Posterior vena cava (tissue), 2 donors: ENCODE measurements at regions of chr12 and their contacts with region 1.

Region 1: DNA sequence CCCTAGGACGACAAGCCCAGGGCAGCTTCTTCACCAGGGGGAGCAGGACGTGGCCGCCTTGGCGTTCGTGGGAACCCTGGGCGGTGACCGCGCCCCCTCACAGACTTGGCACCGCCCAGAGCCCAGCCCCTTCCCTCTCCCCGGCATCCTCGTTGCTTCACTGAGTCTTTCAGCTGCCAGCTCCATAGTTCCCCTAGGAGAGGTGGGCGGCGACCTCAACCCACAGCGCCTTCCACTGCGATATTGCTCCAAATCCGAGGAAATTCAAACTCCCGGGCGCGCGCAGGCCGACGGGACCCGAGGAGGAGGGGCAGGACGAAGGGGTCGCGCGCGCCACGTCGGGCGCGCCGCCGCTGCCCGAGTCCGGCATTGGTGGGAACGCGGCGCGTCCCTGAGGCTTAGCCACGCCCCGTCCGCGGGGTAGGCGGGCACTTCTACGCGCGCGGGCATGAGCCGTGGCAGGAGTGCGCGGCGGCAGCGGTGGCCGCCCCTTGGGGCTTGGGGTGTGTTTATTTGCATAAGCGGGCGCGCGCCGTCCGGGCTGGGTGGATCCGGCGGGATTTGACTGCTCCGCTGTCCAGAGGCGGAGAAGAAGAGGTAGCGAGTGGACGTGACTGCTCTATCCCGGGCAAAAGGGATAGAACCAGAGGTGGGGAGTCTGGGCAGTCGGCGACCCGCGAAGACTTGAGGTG is at the starts of genes APAF1 and IKBIP:
- DNase-seq: peak; percentile 99
- total RNA-seq, gene APAF1: 11.5 to 13.0 TPM
- total RNA-seq, gene IKBIP: 17.5 to 25.9 TPM

Region 2: GRCh38 chr12:98593351-98594049 is 51.4 kb before region 1 on chr12 and contains the start of gene SLC25A3:
- intact Hi-C with region 1: loop called (anchors 10 kb)
- DNase-seq: peak; percentile 99
- total RNA-seq, gene SLC25A3: 319 to 337 TPM

Region 3: DNA sequence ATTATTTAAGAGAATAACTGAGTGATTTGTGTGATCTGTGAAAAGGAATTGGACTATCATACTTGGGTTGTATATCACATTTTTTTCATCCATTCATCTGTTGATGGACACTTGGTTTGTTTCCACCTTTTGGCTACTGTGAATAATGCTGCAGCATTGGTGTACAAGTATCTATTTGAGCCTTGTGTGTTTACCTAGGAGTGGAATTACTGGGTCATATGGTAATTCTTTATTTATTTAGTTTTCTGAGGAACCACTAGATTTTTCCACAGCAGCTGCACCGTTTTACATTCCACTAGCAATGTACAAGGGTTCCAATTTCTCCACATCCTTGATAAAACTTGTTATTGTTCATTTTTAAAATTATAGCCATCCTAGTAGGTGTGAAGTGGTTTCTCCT is 56.3 kb after region 1 on chr12:
- intact Hi-C with region 1: no loop called
- DNase-seq: no peak